A549 (cell line): ENCODE measurements at regions of chr3 and their contacts with region 1.

Region 1: DNA sequence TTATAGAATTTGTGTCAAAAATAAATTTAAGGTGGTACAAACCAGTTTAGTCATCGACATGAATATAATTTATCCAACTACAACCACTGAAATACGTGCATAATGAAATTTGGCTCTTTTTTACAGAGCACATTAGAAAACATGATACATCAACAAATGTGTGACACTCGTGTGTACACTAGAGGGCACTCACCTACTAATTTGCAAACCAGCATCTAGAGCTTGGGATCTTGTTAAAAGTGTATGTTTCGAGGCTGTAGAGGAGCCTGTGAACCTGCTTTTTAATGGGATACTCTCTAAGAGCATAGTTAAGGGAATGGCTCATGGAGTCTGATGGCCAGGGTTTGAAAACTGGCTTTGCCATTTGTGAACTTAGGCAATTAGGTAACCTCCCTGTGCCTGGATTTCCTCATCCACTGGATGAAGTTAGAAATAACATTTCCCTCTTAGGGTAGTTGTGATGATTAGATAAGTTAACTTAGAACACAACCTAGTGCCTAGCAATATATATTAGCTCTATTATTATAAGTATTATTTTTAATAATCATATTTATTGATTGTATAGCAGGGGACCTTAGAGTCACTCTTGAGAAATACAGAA is 8.8 kb upstream of the CPOX start:
- DNase-seq: peak; percentile 56 to 67
- ATAC-seq: peak; percentile 92 to 96
- H3K4me3 ChIP-seq: no peak overlapping the region
- H3K27ac ChIP-seq: no peak overlapping the region
- H3K4me1 ChIP-seq: no peaks in the 10 kb centered on the region
- CTCF ChIP-seq: peak; percentile 93
- EP300 ChIP-seq: no peak
- POLR2A ChIP-seq: no peak
- RAD21 ChIP-seq: peak; percentile 89 to 92

Region 2: GRCh38 chr3:98359993-98360675 is 242.0 kb before region 1 on chr3:
- CTCF ChIA-PET with region 1: no interaction called
- POLR2A ChIA-PET with region 1: no interaction called
- DNase-seq: peak in 1 of 2 experiments; percentile 20
- ATAC-seq: peak in 1 of 2 experiments; percentile 55; a peak in 3 of 6 replicates
- H3K4me3 ChIP-seq: no peak overlapping the region
- H3K27ac ChIP-seq: no peak overlapping the region
- H3K4me1 ChIP-seq: no peaks in the 10 kb centered on the region
- CTCF ChIP-seq: no peak
- EP300 ChIP-seq: no peak
- POLR2A ChIP-seq: no peak
- RAD21 ChIP-seq: peak in 1 of 2 experiments; percentile 26; a peak in 1 of 5 replicates

Region 3: DNA sequence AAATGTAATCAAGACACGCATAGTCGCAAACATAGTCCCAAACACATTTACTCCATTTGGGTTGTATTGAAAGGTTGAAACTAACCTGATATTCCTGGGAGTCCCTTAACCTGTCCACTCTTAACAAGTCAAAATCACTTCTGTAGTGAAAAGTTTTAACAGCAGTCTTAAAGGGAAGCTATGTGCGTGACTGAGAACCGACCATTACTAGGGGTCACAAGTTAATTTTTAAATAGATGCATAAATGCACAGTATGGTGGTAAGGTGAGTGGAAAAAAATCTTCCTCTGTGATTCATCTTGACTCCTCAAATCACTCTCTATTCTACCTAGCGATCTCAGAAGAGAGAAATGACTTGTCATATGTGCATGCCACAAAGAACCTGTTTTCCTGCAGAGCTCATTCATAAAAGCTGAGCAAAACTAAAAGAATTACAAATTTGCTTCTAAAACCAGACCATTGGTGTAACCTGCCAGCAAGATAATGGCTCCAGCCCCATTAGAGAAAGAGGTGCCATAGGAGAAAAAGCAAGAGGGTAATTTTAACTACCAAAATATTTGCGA is 65.6 kb before region 1 on chr3:
- CTCF ChIA-PET with region 1: no interaction called
- POLR2A ChIA-PET with region 1: no interaction called
- DNase-seq: no peak
- ATAC-seq: no peak
- H3K4me3 ChIP-seq: no peak overlapping the region
- H3K27ac ChIP-seq: no peak overlapping the region
- H3K4me1 ChIP-seq: no peaks in the 10 kb centered on the region
- CTCF ChIP-seq: no peak
- EP300 ChIP-seq: no peak
- POLR2A ChIP-seq: no peak
- RAD21 ChIP-seq: no peak

Region 4: DNA sequence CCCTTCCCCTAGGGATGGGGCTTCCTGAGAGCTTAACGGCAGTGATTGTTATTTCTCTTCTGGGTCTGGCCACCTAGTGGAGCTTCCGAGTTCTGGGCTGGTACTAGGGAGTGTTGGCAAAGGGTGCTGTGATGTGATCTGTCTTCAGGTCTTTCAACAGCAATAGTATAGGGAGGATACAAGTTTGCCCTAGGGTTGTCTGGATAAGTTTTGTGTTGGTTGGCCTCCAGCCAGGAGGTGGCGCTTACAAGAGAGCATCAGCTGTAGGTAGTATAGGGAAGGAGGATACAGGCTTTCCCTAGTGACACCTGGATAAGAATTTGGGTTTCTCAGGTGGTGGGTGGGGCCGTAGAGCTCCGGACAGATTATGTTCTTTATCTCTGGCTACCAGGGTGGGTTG is 10.4 kb after region 1 on chr3:
- CTCF ChIA-PET with region 1: interaction called, 23 read pairs
- POLR2A ChIA-PET with region 1: no interaction called
- DNase-seq: peak in 1 of 2 experiments; percentile 16
- ATAC-seq: peak; percentile 39 to 68; a peak in 3 of 6 replicates
- H3K4me3 ChIP-seq: no peak overlapping the region
- H3K27ac ChIP-seq: no peak overlapping the region
- H3K4me1 ChIP-seq: no peaks in the 10 kb centered on the region
- CTCF ChIP-seq: no peak
- EP300 ChIP-seq: no peak
- POLR2A ChIP-seq: no peak
- RAD21 ChIP-seq: no peak

Region 5: DNA sequence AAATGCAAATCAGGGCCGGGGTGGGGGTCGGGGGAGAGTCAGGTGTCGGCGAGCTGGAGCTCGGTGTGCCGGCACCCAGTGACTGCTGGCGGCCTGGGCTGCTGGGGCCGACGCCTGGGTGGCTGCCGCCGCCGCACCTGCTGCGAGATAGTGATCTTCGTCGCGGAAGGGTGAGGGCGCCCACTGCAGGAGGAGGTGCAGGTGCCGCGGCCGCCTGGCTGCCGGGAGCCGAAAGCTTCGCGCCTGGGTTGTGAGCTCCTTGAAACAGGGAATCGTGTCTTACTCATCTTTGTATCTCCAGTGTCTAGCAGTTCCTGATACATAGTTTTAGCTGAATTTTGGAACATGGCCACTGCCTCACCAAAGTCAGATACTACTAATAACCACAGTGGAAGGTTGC is 55.3 kb after region 1 on chr3:
- CTCF ChIA-PET with region 1: interaction called, 10 read pairs
- POLR2A ChIA-PET with region 1: no interaction called
- DNase-seq: peak; percentile 8 to 36
- ATAC-seq: peak; percentile 82 to 86
- H3K4me3 ChIP-seq: 0 out of 3 replicates have a peak overlapping the region, but pooled peaks have one; percentile 9
- H3K27ac ChIP-seq: no peak overlapping the region
- H3K4me1 ChIP-seq: no peaks in the 10 kb centered on the region
- CTCF ChIP-seq: peak; percentile 37
- EP300 ChIP-seq: no peak
- POLR2A ChIP-seq: no peak
- RAD21 ChIP-seq: peak; percentile 20 to 32; a peak in 2 of 5 replicates

Region 6: GRCh38 chr3:98728672-98729071 is 126.5 kb after region 1 on chr3:
- CTCF ChIA-PET with region 1: no interaction called
- POLR2A ChIA-PET with region 1: no interaction called
- DNase-seq: no peak
- ATAC-seq: no peak
- H3K4me3 ChIP-seq: no peak overlapping the region
- H3K27ac ChIP-seq: no peak overlapping the region
- H3K4me1 ChIP-seq: peaks cover 6% of the 10 kb centered on the region; the same call in 2 of the 3 replicates
- CTCF ChIP-seq: no peak
- EP300 ChIP-seq: no peak
- POLR2A ChIP-seq: no peak
- RAD21 ChIP-seq: no peak

Region 7: GRCh38 chr3:98798820-98799219 is 196.6 kb after region 1 on chr3:
- CTCF ChIA-PET with region 1: interaction called, 11 read pairs
- POLR2A ChIA-PET with region 1: no interaction called
- DNase-seq: no peak
- ATAC-seq: no peak
- H3K4me3 ChIP-seq: no peak overlapping the region
- H3K27ac ChIP-seq: no peak overlapping the region
- H3K4me1 ChIP-seq: no peaks in the 10 kb centered on the region
- CTCF ChIP-seq: no peak
- EP300 ChIP-seq: no peak
- POLR2A ChIP-seq: no peak
- RAD21 ChIP-seq: no peak

Region 8: DNA sequence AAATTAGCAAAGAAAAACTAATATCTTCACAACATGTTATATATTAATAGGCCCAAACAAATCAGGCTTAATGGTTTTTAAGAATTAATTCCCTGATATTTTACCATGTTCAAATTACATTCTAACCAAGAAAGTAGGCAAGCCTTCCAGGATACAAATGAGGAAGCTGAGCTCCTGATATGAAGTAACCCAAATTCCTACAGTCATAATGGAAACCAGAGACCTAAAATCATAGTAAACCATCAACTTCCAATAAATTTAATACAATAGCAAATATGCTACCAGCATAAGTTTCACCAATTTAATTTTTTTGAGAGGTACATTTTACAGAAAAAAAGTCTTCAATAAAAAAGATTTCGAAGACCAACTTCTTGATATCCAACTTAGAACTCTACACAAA is 295.5 kb after region 1 on chr3:
- CTCF ChIA-PET with region 1: no interaction called
- POLR2A ChIA-PET with region 1: no interaction called
- DNase-seq: no peak
- ATAC-seq: no peak
- H3K4me3 ChIP-seq: peak overlapping the region; percentile 93
- H3K27ac ChIP-seq: peak overlapping the region; percentile 66 to 95; a peak in 5 of 6 replicates
- H3K4me1 ChIP-seq: peaks cover 38% of the 10 kb centered on the region
- CTCF ChIP-seq: no peak
- EP300 ChIP-seq: no peak
- POLR2A ChIP-seq: no peak
- RAD21 ChIP-seq: no peak

Region 9: GRCh38 chr3:98994128-98994762 is 392.1 kb after region 1 on chr3:
- CTCF ChIA-PET with region 1: interaction called, 55 read pairs
- POLR2A ChIA-PET with region 1: interaction called, 3 read pairs
- DNase-seq: peak in 1 of 2 experiments; percentile 69
- ATAC-seq: peak; percentile 65 to 88; a peak in 5 of 6 replicates
- H3K4me3 ChIP-seq: no peak overlapping the region
- H3K27ac ChIP-seq: peak overlapping the region; percentile 44 to 64; a peak in 4 of 6 replicates
- H3K4me1 ChIP-seq: peaks cover 6% of the 10 kb centered on the region; the same call in 2 of the 3 replicates
- CTCF ChIP-seq: peak; percentile 90
- EP300 ChIP-seq: no peak
- POLR2A ChIP-seq: no peak
- RAD21 ChIP-seq: peak; percentile 94 to 97

Region 10: GRCh38 chr3:99172736-99173657 is 570.8 kb after region 1 on chr3:
- CTCF ChIA-PET with region 1: interaction called, 22 read pairs
- POLR2A ChIA-PET with region 1: no interaction called
- DNase-seq: peak; percentile 26 to 67
- ATAC-seq: peak; percentile 86 to 91; a peak in 5 of 6 replicates
- H3K4me3 ChIP-seq: no peak overlapping the region
- H3K27ac ChIP-seq: no peak overlapping the region
- H3K4me1 ChIP-seq: no peaks in the 10 kb centered on the region
- CTCF ChIP-seq: peak; percentile 79
- EP300 ChIP-seq: no peak
- POLR2A ChIP-seq: no peak
- RAD21 ChIP-seq: peak; percentile 72 to 77